ENCODE measurements at regions of chr7 and their contacts with region 1.

Region 1: GRCh38 chr7:91034459-91035368 is 229.5 kb upstream of the FZD1 start:
- DNase-seq: peak; percentile 74

Region 2: GRCh38 chr7:90595801-90596671 is 438.7 kb before region 1 on chr7 and contains the start of gene CDK14:
- in situ Hi-C with region 1: loop called (anchors 25 kb)
- DNase-seq: peak; percentile 73

Measured in ACHN (cell line).